Left lung (tissue), 14 donors: ENCODE measurements at regions of chr16 and their contacts with region 1.

Region 1: GRCh38 chr16:8567750-8568617 is 22.3 kb downstream of the TMEM114 start:
- DNase-seq: peak in 3 of 4 donors; percentile 63 to 87 (median 75)
- ATAC-seq: peak; percentile 97
- H3K4me3 ChIP-seq: no peak overlapping the region
- H3K27ac ChIP-seq: no peak overlapping the region
- H3K4me1 ChIP-seq: no peaks in the 10 kb centered on the region
- H3K27me3 ChIP-seq: peaks cover 5 to 49% of the 10 kb centered on the region in 2 donors
- CTCF ChIP-seq: peak; percentile 94 to 96

Region 2: DNA sequence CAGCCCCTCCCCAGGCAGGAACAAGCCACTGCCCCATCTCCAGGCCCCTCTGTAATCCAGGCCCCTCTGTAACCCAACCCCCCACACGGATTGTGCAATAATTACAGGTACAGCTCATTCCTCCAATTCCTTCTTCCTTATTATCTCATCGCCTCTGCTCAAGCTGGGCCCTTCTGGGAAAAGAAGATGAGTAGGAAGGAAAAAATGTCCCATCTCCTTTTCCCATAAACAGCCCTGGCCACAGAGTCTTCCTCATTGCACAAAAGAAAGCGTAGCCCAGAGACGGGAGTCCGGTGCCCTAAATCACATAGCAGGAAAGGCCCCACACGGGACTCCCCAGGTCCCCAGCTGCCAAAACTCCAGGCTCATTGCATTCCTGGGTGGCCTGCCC is 310.5 kb after region 1 on chr16:
- intact Hi-C with region 1: loop called in 1 of 2 experiments (anchors 5 kb)
- DNase-seq: peak in 1 of 4 donors; percentile 24
- ATAC-seq: peak; percentile 33
- H3K4me3 ChIP-seq: no peak overlapping the region
- H3K27ac ChIP-seq: no peak overlapping the region
- H3K4me1 ChIP-seq: peaks cover 0 to 8% of the 10 kb centered on the region in 2 donors
- H3K27me3 ChIP-seq: peaks cover 0 to 16% of the 10 kb centered on the region in 2 donors
- CTCF ChIP-seq: no peak